ENCODE measurements at regions of chr5 and their contacts with region 1.

Region 1: DNA sequence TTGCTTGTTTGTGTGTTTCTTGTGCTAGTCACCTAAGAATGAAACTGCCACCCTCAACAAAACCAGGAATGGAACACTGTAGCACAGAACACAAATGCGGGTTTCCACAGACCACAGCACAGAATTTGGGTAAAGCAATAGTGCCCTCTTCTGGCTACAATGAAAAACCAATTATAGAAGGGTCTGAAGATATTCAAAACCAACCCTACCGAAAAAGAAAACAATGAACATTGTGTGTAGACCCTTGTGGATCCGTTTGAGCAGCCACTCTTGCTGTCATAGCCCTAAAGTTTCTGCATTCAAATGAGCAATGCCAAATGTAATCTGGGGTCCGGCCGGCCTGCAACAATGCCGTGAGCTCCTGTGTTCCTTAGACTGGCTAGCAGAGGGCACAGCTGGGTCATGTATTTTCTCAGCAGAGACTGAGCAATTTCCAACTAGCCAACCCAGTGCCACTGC is 8.3 kb upstream of the ENC1 start:
- DNase-seq: peak; percentile 32
- H3K4me3 ChIP-seq: no peak overlapping the region
- H3K27ac ChIP-seq: no peak overlapping the region
- H3K4me1 ChIP-seq: no peaks in the 10 kb centered on the region
- H3K27me3 ChIP-seq: no peaks in the 10 kb centered on the region
- CTCF ChIP-seq: peak; percentile 42 to 77 (median 73)
- POLR2A ChIP-seq: no peak

Region 2: GRCh38 chr5:73902327-73903051 is 746.4 kb before region 1 on chr5:
- intact Hi-C with region 1: loop called (anchors 2 kb)
- DNase-seq: peak; percentile 34
- H3K4me3 ChIP-seq: no peak overlapping the region
- H3K27ac ChIP-seq: no peak overlapping the region
- H3K4me1 ChIP-seq: no peaks in the 10 kb centered on the region
- H3K27me3 ChIP-seq: no peaks in the 10 kb centered on the region
- CTCF ChIP-seq: peak; percentile 91 to 96 (median 92)
- POLR2A ChIP-seq: no peak

Region 3: DNA sequence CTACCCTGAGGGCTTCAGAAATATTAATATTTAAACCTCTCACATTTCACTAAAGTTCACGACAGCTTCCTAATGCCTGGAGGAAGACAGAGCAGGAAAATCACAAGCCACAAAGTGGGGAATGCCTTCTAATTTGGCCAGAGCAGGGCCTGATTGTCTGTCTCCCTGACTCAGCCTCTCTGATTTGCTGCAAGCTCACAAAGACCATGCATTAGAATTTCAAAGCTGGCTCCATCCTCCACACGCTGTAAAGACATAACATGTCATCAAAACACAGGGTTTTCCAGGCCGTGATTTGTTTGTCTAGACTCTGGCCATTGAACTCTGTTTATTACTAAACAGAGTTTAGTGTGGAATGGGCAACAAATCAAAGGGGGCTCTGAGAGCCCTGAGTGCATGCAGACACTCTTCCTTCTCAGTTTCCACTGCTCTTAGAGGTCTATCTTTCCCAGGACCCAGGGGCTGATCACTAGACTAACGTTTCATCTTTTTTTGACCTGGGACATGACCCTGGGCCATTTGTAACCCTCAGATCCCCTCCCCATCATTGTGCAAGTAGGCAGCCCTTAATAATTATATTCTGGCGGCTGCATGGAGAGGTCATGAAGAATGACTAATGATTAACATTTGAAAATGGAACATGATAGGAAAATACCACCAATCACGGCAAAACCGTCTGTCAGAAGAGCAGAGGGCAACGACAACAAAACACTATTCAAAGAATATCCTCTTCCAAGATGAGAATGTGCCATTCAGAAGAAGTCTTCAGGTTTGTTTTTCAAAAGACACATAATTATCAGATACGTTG is 148.6 kb before region 1 on chr5:
- intact Hi-C with region 1: no loop called
- DNase-seq: no peak
- H3K4me3 ChIP-seq: no peak overlapping the region
- H3K27ac ChIP-seq: peak overlapping the region in 1 of 2 donors; percentile 22
- H3K4me1 ChIP-seq: no peaks in the 10 kb centered on the region
- H3K27me3 ChIP-seq: no peaks in the 10 kb centered on the region
- CTCF ChIP-seq: no peak
- POLR2A ChIP-seq: no peak

Region 4: DNA sequence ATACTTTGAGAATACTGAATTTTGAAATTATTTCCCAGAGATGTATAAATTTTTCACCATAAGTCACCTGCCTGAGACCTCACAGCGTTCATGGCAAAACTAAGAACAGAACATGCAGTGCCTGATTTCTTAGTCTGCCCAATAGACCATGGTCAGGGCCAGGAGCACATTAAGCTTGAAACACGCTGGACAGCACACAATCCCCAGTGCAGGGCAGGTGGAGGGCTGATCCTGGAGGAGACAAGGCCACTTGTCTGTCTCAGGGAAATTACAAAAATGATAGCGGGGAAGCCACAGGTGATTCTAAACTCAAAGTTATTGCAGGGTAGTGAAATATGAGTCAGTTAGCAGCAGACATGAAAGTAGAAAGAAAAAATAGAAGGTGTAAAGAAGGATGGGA is 10.3 kb after region 1 on chr5:
- intact Hi-C with region 1: loop called (anchors 1 kb)
- DNase-seq: no peak
- H3K4me3 ChIP-seq: no peak overlapping the region
- H3K27ac ChIP-seq: no peak overlapping the region
- H3K4me1 ChIP-seq: no peaks in the 10 kb centered on the region
- H3K27me3 ChIP-seq: no peaks in the 10 kb centered on the region
- CTCF ChIP-seq: no peak
- POLR2A ChIP-seq: no peak